ENCODE measurements at regions of chr1 and their contacts with region 1.

Region 1: GRCh38 chr1:154558575-154559465 is at the start of gene UBE2Q1:
- DNase-seq: peak; percentile 99
- ATAC-seq: peak; percentile 86
- H3K4me3 ChIP-seq: peak within 1 kb of the TSS; percentile 95
- H3K27ac ChIP-seq: peak within 1 kb of the TSS; percentile 94
- H3K4me1 ChIP-seq: peaks cover 3% of the 10 kb centered on the region
- H3K27me3 ChIP-seq: no peaks in the 10 kb centered on the region
- CTCF ChIP-seq: no peak
- POLR2A ChIP-seq: no peak
- RAD21 ChIP-seq: no peak
- total RNA-seq, gene UBE2Q1: 24.7 and 25.3 TPM in 2 replicates

Region 2: DNA sequence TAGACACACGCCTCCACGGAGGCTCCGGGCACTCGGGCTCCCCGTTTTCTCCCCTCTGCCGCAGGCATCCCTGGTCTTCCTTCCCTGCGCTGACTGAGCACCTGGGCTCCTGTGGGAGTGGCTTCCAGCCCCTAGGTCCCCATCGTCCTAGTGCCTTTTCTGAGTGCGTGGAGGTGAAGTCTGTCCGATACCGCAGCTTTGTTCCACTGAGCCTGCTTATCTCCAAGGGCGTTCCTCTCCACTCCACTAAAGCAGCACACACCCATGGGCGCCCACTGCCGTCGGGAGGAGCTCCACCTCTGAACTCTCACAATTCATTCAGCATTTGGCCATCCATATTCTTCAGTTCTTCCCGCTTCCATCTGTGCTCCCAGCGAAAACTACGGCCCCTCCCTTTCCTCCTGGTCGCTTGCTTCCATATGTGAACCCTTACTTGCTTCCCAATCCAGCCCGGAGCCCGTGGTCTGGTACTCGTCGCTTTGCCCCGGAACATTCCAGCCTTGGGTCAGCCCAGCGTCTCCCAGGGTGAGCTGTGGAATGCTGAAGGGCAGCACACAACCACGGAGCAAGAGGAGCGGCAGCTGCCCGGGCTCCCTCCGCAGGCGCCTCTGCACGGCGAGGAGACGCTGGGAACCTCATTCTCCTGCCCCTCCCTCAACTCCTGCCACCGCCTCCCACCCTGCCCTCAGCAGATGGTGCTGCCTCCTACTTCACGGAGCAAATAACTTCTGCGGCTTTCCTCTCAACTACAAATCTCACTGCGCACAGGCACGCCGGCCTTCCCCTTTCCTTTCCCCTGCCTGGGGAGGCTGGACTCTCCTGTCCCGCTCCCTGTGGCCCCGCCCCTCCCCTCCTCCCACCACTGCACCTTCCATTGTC is 206.0 kb before region 1 on chr1:
- CTCF ChIA-PET with region 1: no interaction called
- POLR2A ChIA-PET with region 1: no interaction called
- dilution Hi-C with region 1: no loop called
- in situ Hi-C with region 1: no loop called
- intact Hi-C with region 1: no loop called
- DNase-seq: peak; percentile 31
- ATAC-seq: peak; percentile 78
- H3K4me3 ChIP-seq: peak overlapping the region; percentile 4; the same call in 1 of the 2 replicates
- H3K27ac ChIP-seq: peak overlapping the region; percentile 26; the same call in 1 of the 2 replicates
- H3K4me1 ChIP-seq: peaks cover 10% of the 10 kb centered on the region; the same call in 1 of the 2 replicates
- H3K27me3 ChIP-seq: peaks cover 2% of the 10 kb centered on the region
- CTCF ChIP-seq: no peak
- POLR2A ChIP-seq: no peak
- RAD21 ChIP-seq: no peak

Region 3: GRCh38 chr1:154463512-154463990 is 95.3 kb before region 1 on chr1:
- CTCF ChIA-PET with region 1: no interaction called
- POLR2A ChIA-PET with region 1: no interaction called
- dilution Hi-C with region 1: no loop called
- in situ Hi-C with region 1: no loop called
- intact Hi-C with region 1: no loop called
- DNase-seq: no peak
- ATAC-seq: peak; percentile 40
- H3K4me3 ChIP-seq: no peak overlapping the region
- H3K27ac ChIP-seq: peak overlapping the region; percentile 86; the same call in 1 of the 2 replicates
- H3K4me1 ChIP-seq: peaks cover 8% of the 10 kb centered on the region
- H3K27me3 ChIP-seq: no peaks in the 10 kb centered on the region; the same call in 1 of the 2 replicates
- CTCF ChIP-seq: no peak
- POLR2A ChIP-seq: no peak
- RAD21 ChIP-seq: no peak

Region 4: DNA sequence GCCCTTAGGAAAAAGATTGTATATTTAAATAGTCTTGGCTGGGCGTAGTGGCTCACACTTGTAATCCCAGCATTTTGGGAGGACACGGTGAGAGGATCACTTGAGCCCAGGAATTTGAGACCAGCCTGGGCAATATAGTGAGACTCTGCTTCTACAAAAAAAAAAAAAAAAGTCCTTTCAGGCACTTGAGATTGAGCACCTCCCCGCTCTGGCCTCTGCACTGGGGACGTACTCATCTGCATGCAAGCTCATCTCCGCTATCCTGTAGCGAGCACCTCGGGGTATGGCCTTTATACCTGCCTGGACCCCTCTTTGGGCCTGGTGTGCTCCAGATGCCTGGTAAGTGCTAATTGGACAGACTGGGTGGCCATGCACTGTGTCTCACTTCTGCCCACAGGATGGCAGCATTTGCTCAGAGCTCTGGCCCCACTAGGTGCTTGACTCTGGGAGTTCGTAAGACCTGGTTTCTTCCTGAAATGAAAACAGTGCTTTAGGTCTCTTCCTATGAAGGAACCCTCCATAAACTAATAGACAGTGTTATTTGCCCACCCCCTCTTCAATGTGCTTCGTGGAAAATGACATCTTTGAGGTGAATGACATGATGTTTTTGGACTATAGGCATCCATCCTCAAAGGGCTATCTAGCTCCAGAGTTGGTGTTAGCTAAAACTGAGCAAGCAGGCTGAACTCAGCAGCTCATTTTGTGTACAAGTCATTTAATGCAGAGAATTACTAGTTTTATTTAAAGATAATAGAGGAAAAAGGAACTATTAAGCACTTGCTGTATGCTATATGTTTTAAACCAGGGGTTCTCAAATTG is 110.9 kb after region 1 on chr1:
- CTCF ChIA-PET with region 1: interaction called, 9 read pairs
- POLR2A ChIA-PET with region 1: no interaction called
- dilution Hi-C with region 1: no loop called
- in situ Hi-C with region 1: no loop called
- intact Hi-C with region 1: loop called (anchors 1 kb)
- DNase-seq: peak; percentile 69
- ATAC-seq: peak; percentile 99
- H3K4me3 ChIP-seq: no peak overlapping the region
- H3K27ac ChIP-seq: no peak overlapping the region
- H3K4me1 ChIP-seq: no peaks in the 10 kb centered on the region
- H3K27me3 ChIP-seq: peaks cover 24% of the 10 kb centered on the region
- CTCF ChIP-seq: peak; percentile 78
- POLR2A ChIP-seq: no peak
- RAD21 ChIP-seq: peak; percentile 88

Region 5: GRCh38 chr1:154878371-154879022 is 319.7 kb after region 1 on chr1:
- CTCF ChIA-PET with region 1: interaction called, 9 read pairs
- POLR2A ChIA-PET with region 1: no interaction called
- dilution Hi-C with region 1: no loop called
- in situ Hi-C with region 1: no loop called
- intact Hi-C with region 1: loop called (anchors 1 kb)
- DNase-seq: peak; percentile 62
- ATAC-seq: peak; percentile 99
- H3K4me3 ChIP-seq: no peak overlapping the region
- H3K27ac ChIP-seq: no peak overlapping the region
- H3K4me1 ChIP-seq: peaks cover 1% of the 10 kb centered on the region; the same call in 1 of the 2 replicates
- H3K27me3 ChIP-seq: peaks cover 64% of the 10 kb centered on the region
- CTCF ChIP-seq: peak; percentile 84
- POLR2A ChIP-seq: no peak
- RAD21 ChIP-seq: peak; percentile 94

Region 6: DNA sequence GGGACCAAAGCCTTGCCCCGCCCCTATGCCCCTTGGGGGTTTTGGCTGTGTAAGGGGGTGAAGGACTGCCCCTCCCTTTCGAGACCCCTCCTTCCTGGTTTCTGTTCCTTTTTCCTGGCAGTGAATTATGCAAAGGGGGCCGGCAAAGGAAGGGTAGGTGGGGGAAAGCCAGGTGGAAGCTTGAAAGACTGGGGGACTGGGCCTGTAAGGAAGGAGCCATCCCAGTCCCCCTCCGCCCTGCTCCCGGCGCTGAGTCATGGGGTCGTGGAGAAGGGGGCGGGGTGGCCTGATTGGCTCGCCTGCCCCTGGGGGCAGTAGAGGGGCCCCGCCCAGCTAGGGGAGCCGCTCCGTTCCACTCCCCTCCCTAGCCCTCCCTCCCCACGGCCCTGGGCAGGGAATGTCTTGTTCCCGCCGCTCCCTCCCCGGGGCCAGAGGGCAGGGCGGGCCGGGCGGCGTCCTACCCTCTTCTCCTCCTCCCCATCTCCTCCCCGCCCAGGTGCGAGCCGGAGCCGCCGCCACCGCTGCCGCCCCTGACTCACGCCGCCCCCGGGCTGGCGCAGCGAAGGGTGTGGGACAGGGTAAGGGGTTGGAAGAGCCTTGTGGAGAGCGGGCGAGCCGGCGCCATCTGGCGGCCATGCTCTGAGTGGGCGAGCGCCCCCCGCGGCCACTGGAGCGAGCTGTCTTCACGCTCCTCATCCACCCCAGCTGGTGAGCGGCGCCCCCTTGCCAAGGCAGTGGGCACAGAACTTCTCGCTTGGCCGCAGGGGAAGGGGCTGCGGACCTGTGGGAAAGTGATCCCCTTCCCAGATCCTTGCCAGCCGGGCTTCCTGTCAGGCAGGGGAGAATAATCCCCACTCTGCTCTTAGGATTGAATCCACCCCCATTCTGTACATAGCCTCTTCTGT is 458.5 kb after region 1 on chr1:
- CTCF ChIA-PET with region 1: no interaction called
- POLR2A ChIA-PET with region 1: interaction called, 13 read pairs
- dilution Hi-C with region 1: no loop called
- in situ Hi-C with region 1: no loop called
- intact Hi-C with region 1: no loop called
- DNase-seq: peak; percentile 83
- ATAC-seq: peak; percentile 94
- H3K4me3 ChIP-seq: peak overlapping the region; percentile 41
- H3K27ac ChIP-seq: peak overlapping the region; percentile 41
- H3K4me1 ChIP-seq: peaks cover 6% of the 10 kb centered on the region; the same call in 1 of the 2 replicates
- H3K27me3 ChIP-seq: no peaks in the 10 kb centered on the region
- CTCF ChIP-seq: peak; percentile 100; the same call in 1 of the 2 replicates
- POLR2A ChIP-seq: no peak
- RAD21 ChIP-seq: peak; percentile 83